Endothelial cell of umbilical vein (primary cell): ENCODE measurements at regions of chr5 and their contacts with region 1.

Region 1: GRCh38 chr5:170434966-170435605 is 45.9 kb upstream of the KCNMB1 start:
- DNase-seq: peak; percentile 52
- H3K4me3 ChIP-seq: no peak overlapping the region
- H3K27ac ChIP-seq: no peak overlapping the region
- H3K4me1 ChIP-seq: no peaks in the 10 kb centered on the region
- H3K27me3 ChIP-seq: peaks cover 4% of the 10 kb centered on the region in 2 experiments
- CTCF ChIP-seq: peak; percentile 94 to 98
- POLR2A ChIP-seq: no peak

Region 2: DNA sequence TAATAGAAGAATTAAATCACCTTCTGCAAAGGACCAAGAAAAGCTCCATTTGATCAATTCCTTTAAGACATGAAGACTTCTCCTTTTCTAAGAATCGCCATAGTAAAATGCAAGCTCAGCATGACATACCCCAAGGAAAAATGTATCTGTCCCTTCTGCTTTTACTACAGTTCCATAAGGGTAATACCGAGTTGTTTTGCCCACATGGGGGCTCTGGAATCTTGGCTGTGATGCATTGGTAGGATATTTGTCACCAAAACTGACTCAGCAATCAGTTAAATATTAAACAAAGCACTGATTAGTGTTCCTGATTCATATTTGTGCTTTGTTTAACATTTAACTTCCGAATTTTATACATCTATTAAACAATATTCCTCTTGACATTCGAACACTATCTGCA is 44.4 kb after region 1 on chr5:
- CTCF ChIA-PET with region 1: interaction called, 11 read pairs
- POLR2A ChIA-PET with region 1: no interaction called
- dilution Hi-C with region 1: no loop called
- intact Hi-C with region 1: loop called (anchors 1 kb)
- DNase-seq: peak; percentile 71
- H3K4me3 ChIP-seq: no peak overlapping the region
- H3K27ac ChIP-seq: peak overlapping the region; percentile 52
- H3K4me1 ChIP-seq: peaks cover 6% of the 10 kb centered on the region
- H3K27me3 ChIP-seq: no peaks in the 10 kb centered on the region
- CTCF ChIP-seq: peak in 1 of 2 donors; percentile 12
- POLR2A ChIP-seq: no peak

Region 3: DNA sequence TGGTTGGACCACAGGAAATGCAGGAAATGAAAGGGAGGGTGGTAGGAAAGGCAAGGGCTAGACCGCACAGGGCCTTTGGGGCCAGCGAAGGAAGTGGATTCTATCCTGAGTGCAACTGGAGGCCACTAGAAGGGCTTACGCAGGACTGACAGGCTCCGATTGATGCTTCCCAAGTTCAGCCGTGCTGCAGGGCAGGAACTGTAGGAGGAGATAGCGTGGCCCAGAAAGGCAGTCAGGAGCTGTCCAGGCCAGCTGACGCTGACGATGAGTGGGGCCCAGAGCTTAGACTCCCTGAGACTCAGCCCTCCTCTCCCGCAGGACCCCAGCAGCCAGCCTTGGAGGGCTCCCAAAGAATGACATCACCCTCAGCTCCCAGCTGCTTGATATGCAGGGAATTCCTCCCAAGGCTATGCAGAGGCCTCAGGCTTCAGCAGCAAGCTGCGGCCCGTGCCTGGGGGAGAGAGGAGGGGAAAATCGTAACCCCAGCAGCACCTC is 117.6 kb after region 1 on chr5:
- CTCF ChIA-PET with region 1: no interaction called
- POLR2A ChIA-PET with region 1: no interaction called
- dilution Hi-C with region 1: no loop called
- intact Hi-C with region 1: loop called (anchors 5 kb)
- DNase-seq: peak; percentile 41
- H3K4me3 ChIP-seq: no peak overlapping the region
- H3K27ac ChIP-seq: no peak overlapping the region
- H3K4me1 ChIP-seq: no peaks in the 10 kb centered on the region
- H3K27me3 ChIP-seq: no peaks in the 10 kb centered on the region
- CTCF ChIP-seq: no peak
- POLR2A ChIP-seq: no peak

Region 4: DNA sequence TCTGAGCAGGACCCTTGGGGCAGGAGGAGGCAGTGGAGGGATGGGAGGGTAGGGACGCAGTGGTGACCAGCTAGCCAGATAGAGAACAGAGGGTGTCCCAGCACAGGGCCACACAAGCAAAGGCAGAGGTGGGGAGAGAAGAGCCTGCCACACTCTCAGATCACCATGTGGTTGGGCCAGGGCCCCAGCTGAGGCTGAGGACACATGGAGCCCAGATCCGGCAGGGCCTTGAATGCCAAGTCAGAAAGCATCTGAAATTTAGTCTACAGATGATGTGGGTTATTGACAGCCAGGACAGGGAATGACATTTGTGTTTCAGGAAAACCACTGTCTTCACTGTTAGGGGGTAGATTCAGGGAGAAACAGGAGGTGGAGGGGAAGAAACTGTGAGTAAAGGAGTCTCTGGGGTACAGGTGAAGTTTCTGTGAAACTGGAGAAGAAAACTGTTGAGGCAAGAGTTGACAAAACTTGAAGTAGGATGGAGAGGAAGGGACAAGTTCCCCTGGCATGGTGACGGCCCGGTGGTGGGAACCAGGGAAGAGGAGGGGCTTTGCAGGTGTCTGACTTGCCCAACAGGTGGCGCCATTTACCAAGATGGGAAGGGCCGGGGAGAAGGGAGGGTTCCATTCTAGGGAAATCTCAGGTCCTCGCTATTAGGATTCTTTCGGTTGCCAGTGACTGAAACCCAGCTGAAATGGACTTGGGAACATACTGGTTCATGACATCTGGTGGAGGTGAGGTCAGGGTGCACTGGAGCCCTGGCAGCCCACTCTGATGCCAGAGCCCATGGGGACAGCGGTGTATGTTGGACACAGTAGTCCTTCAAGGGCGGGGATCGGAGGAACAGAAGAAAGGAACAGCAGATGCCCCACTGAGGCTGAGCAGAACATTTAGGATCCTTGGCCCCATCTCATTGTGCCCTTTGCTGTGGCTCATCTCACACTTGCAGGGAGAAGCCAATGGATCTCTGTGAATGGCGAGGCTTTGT is 168.8 kb after region 1 on chr5:
- CTCF ChIA-PET with region 1: interaction called, 23 read pairs
- POLR2A ChIA-PET with region 1: no interaction called
- dilution Hi-C with region 1: no loop called
- intact Hi-C with region 1: loop called (anchors 1 kb)
- DNase-seq: peak; percentile 34
- H3K4me3 ChIP-seq: no peak overlapping the region
- H3K27ac ChIP-seq: no peak overlapping the region
- H3K4me1 ChIP-seq: no peaks in the 10 kb centered on the region
- H3K27me3 ChIP-seq: peaks cover 0 to 2% of the 10 kb centered on the region in 2 experiments
- CTCF ChIP-seq: peak; percentile 65 to 77
- POLR2A ChIP-seq: no peak

Region 5: GRCh38 chr5:170623576-170624181 is 188.6 kb after region 1 on chr5:
- CTCF ChIA-PET with region 1: interaction called, 288 read pairs
- POLR2A ChIA-PET with region 1: no interaction called
- dilution Hi-C with region 1: no loop called
- intact Hi-C with region 1: loop called (anchors 1 kb)
- DNase-seq: peak; percentile 61
- H3K4me3 ChIP-seq: no peak overlapping the region
- H3K27ac ChIP-seq: no peak overlapping the region
- H3K4me1 ChIP-seq: no peaks in the 10 kb centered on the region
- H3K27me3 ChIP-seq: peaks cover 2 to 3% of the 10 kb centered on the region in 2 experiments
- CTCF ChIP-seq: peak; percentile 74 to 87
- POLR2A ChIP-seq: no peak

Region 6: GRCh38 chr5:171166766-171167165 is 731.7 kb after region 1 on chr5:
- CTCF ChIA-PET with region 1: no interaction called
- POLR2A ChIA-PET with region 1: no interaction called
- dilution Hi-C with region 1: no loop called
- intact Hi-C with region 1: no loop called
- DNase-seq: no peak
- H3K4me3 ChIP-seq: no peak overlapping the region
- H3K27ac ChIP-seq: no peak overlapping the region
- H3K4me1 ChIP-seq: peaks cover 7% of the 10 kb centered on the region
- H3K27me3 ChIP-seq: no peaks in the 10 kb centered on the region
- CTCF ChIP-seq: no peak
- POLR2A ChIP-seq: no peak

Region 7: GRCh38 chr5:171437286-171437821 is 1002.3 kb after region 1 on chr5:
- CTCF ChIA-PET with region 1: no interaction called
- POLR2A ChIA-PET with region 1: no interaction called
- dilution Hi-C with region 1: no loop called
- intact Hi-C with region 1: no loop called
- DNase-seq: no peak
- H3K4me3 ChIP-seq: no peak overlapping the region
- H3K27ac ChIP-seq: no peak overlapping the region
- H3K4me1 ChIP-seq: no peaks in the 10 kb centered on the region
- H3K27me3 ChIP-seq: no peaks in the 10 kb centered on the region
- CTCF ChIP-seq: no peak
- POLR2A ChIP-seq: no peak